Endothelial cell of umbilical vein (primary cell): ENCODE measurements at regions of chr22 and their contacts with region 1.

Region 1: DNA sequence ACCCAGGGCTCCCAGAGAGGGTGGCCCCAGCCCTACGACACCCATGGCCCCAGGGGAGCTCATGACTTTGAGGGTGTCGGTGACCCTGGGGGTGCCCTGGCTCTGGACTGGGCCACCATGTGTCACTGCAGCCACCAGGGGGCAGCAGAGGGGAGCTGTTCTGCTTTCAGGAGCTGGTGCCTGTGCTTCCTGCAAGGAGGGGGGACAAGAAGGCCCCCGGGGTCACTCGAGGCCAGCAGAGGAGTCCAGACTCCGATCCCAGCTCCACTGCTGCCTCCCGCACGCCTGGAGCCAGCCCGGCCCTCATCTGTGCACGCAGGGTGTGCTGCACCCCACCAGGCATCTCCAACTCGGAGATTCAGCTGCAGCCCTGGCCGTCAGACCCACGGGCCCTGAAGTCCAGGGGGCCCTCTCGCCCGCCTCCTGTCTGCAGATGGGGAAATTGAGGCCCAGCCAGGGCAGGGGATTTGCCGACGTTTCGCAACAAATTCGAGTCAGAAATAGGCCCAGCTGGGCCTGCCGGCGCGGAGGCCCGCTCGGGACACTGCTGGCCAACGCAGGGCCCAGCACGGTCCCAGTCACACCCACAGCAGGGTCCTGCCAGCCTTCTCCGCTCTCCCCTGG is 29.5 kb upstream of the WNT7B start:
- DNase-seq: peak; percentile 82
- H3K4me3 ChIP-seq: no peak overlapping the region
- H3K27ac ChIP-seq: peak overlapping the region; percentile 86
- H3K4me1 ChIP-seq: peaks cover 23% of the 10 kb centered on the region
- H3K27me3 ChIP-seq: no peaks in the 10 kb centered on the region
- CTCF ChIP-seq: peak; percentile 94 to 95
- POLR2A ChIP-seq: no peak

Region 2: DNA sequence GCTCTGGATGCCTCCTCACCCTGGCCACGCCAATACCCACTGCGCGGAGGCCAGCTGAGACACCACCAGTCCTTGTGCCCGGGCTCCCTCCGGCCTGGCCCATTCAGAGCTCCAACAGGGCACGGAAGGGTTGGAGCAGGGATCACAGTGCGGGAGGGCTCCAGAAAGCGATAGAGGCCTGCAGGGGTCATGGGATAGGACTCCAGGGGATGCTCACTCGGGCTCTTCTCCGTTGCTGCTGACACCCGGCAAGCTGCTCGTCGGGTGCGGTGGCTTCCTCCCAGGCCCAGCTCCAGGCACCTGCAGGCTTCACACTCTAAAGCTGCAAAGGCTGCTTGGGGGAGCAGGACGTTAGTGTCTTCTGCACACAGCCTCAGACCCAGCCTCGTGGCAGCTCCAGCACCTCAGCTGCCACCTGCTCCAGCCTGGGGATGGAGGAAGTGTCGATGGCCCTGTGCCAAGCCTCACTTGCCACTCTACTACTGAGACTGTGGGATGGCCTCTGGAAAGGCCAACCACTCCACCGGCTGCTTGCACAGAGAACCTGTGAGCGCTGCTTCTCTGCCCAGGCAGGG is 40.1 kb before region 1 on chr22:
- CTCF ChIA-PET with region 1: no interaction called
- POLR2A ChIA-PET with region 1: no interaction called
- dilution Hi-C with region 1: no loop called
- intact Hi-C with region 1: no loop called
- DNase-seq: no peak
- H3K4me3 ChIP-seq: no peak overlapping the region
- H3K27ac ChIP-seq: no peak overlapping the region
- H3K4me1 ChIP-seq: peaks cover 10% of the 10 kb centered on the region
- H3K27me3 ChIP-seq: peaks cover 13 to 17% of the 10 kb centered on the region in 2 experiments
- CTCF ChIP-seq: no peak
- POLR2A ChIP-seq: no peak

Region 3: GRCh38 chr22:45977003-45977411 is 29.5 kb before region 1 on chr22 and contains the start of gene WNT7B:
- CTCF ChIA-PET with region 1: no interaction called
- POLR2A ChIA-PET with region 1: no interaction called
- dilution Hi-C with region 1: no loop called
- intact Hi-C with region 1: no loop called
- DNase-seq: no peak
- H3K4me3 ChIP-seq: no peak within 1 kb of the TSS
- H3K27ac ChIP-seq: no peak within 1 kb of the TSS
- H3K4me1 ChIP-seq: no peaks in the 10 kb centered on the region
- H3K27me3 ChIP-seq: peaks cover 45 to 53% of the 10 kb centered on the region in 2 experiments
- CTCF ChIP-seq: no peak
- POLR2A ChIP-seq: no peak
- total RNA-seq, gene WNT7B: not detected in 2 replicates

Region 4: GRCh38 chr22:46019351-46019750 is 12.9 kb after region 1 on chr22:
- CTCF ChIA-PET with region 1: interaction called, 21 read pairs
- POLR2A ChIA-PET with region 1: interaction called, 3 read pairs
- dilution Hi-C with region 1: no loop called
- intact Hi-C with region 1: no loop called
- DNase-seq: no peak
- H3K4me3 ChIP-seq: no peak overlapping the region
- H3K27ac ChIP-seq: no peak overlapping the region
- H3K4me1 ChIP-seq: no peaks in the 10 kb centered on the region
- H3K27me3 ChIP-seq: no peaks in the 10 kb centered on the region
- CTCF ChIP-seq: no peak
- POLR2A ChIP-seq: no peak

Region 5: GRCh38 chr22:46035742-46036557 is 29.5 kb after region 1 on chr22:
- CTCF ChIA-PET with region 1: interaction called, 49 read pairs
- POLR2A ChIA-PET with region 1: interaction called, 7 read pairs
- dilution Hi-C with region 1: no loop called
- intact Hi-C with region 1: loop called (anchors 1 kb)
- DNase-seq: peak; percentile 100
- H3K4me3 ChIP-seq: peak overlapping the region; percentile 18 to 68 (median 26)
- H3K27ac ChIP-seq: peak overlapping the region; percentile 89
- H3K4me1 ChIP-seq: peaks cover 17% of the 10 kb centered on the region
- H3K27me3 ChIP-seq: no peaks in the 10 kb centered on the region
- CTCF ChIP-seq: no peak
- POLR2A ChIP-seq: peak; percentile 57

Region 6: DNA sequence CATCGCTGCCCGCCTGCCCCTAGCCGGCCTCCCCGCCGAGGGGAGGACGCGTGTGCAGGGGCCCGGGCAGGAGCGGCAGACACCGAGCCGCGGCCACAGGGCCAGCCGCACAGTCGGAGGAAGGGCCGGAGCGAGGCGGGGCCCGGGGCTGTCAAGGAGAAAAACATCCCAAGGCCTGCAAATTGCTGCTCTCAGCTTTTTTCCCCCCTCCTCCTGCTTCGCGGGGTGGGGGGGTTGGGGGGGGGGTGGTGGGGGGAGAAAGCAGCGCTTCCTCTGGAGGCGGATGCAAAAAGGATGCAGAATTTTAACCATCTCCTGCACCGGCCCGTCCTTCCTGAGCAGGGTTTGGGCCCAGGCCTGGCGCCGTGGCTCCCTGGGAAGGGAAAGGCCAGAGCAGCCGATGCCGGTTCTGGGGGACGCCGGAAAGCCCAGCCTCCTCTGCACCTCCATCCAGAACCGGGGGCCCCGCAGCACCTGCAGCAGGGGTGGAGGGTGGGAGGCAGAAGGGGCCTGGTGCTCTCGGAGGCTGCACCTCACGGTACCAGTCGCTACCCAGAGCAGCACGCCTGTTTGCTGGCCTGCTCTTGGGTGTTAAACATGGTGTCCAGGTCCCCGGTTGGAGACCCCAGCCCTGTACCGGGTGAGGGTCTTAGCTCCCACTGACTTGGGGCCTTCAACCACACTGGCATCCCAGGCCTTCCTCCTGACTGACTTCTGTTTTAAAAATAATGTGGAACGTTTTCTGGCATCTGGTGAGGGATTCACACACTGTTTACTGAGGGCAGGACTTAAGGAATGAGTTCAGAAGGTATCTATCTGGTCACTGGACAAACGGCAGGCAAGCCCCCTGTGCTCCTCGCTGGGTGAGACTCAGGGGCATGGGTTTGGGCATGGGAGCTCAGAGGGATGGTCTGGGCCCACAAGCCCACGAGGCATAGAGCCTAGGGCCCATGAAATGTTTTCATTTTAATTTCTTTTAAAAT is 47.9 kb after region 1 on chr22:
- CTCF ChIA-PET with region 1: interaction called, 21 read pairs
- POLR2A ChIA-PET with region 1: no interaction called
- dilution Hi-C with region 1: no loop called
- intact Hi-C with region 1: no loop called
- DNase-seq: peak; percentile 55
- H3K4me3 ChIP-seq: peak overlapping the region; percentile 29 to 49 (median 49)
- H3K27ac ChIP-seq: peak overlapping the region; percentile 56
- H3K4me1 ChIP-seq: peaks cover 52% of the 10 kb centered on the region
- H3K27me3 ChIP-seq: no peaks in the 10 kb centered on the region
- CTCF ChIP-seq: no peak
- POLR2A ChIP-seq: peak; percentile 13

Region 7: GRCh38 chr22:46081036-46081830 is 74.7 kb after region 1 on chr22:
- CTCF ChIA-PET with region 1: interaction called, 65 read pairs
- POLR2A ChIA-PET with region 1: interaction called, 3 read pairs
- dilution Hi-C with region 1: no loop called
- intact Hi-C with region 1: no loop called
- DNase-seq: no peak
- H3K4me3 ChIP-seq: no peak overlapping the region
- H3K27ac ChIP-seq: no peak overlapping the region
- H3K4me1 ChIP-seq: peaks cover 52% of the 10 kb centered on the region
- H3K27me3 ChIP-seq: no peaks in the 10 kb centered on the region
- CTCF ChIP-seq: no peak
- POLR2A ChIP-seq: no peak

Region 8: GRCh38 chr22:46108564-46109473 is 102.3 kb after region 1 on chr22:
- CTCF ChIA-PET with region 1: interaction called, 241 read pairs
- POLR2A ChIA-PET with region 1: no interaction called
- dilution Hi-C with region 1: no loop called
- intact Hi-C with region 1: no loop called
- DNase-seq: peak; percentile 20
- H3K4me3 ChIP-seq: no peak overlapping the region
- H3K27ac ChIP-seq: no peak overlapping the region
- H3K4me1 ChIP-seq: no peaks in the 10 kb centered on the region
- H3K27me3 ChIP-seq: no peaks in the 10 kb centered on the region
- CTCF ChIP-seq: no peak
- POLR2A ChIP-seq: peak; percentile 33

Region 9: DNA sequence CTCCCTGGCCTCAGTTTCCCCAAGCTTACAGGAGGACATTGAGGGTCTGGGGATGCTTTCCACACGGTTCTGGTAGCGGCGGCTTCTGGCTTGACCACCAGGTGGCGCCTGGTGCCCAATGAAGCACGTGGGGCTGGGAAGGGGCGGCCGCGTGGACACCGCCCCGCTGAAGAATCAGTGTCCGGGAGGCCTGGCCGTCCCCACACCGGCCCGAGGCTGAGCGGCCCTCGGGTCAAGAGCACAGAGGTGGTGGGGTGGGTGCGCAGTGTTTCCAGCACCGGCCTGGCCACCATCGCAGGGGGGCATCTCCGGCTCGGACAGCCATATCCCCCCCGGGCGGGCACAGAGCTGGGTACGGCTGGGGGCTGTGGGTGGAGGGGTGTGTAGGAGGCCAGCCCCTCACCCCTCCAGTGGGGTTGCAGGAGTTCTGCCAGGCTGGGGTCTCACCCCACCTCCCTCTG is 116.0 kb after region 1 on chr22:
- CTCF ChIA-PET with region 1: interaction called, 241 read pairs
- POLR2A ChIA-PET with region 1: no interaction called
- dilution Hi-C with region 1: no loop called
- intact Hi-C with region 1: no loop called
- DNase-seq: peak; percentile 43
- H3K4me3 ChIP-seq: no peak overlapping the region
- H3K27ac ChIP-seq: no peak overlapping the region
- H3K4me1 ChIP-seq: no peaks in the 10 kb centered on the region
- H3K27me3 ChIP-seq: no peaks in the 10 kb centered on the region
- CTCF ChIP-seq: peak; percentile 93 to 95
- POLR2A ChIP-seq: no peak